OCI-LY7 (cell line): ENCODE measurements at regions of chr6 and their contacts with region 1.

Region 1: DNA sequence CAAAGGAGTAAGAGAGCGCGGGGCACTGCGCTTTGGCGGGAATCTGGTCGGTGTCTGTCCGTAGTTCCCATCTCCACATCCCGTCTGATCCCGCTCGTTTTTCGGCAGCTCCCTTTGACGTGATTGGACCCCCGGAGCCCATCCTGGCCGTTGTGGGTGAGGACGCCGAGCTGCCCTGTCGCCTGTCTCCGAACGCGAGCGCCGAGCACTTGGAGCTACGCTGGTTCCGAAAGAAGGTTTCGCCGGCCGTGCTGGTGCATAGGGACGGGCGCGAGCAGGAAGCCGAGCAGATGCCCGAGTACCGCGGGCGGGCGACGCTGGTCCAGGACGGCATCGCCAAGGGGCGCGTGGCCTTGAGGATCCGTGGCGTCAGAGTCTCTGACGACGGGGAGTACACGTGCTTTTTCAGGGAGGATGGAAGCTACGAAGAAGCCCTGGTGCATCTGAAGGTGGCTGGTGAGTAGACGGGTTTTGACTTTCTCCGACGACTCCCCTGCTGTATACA is 1.4 kb downstream of the BTN1A1 start:
- DNase-seq: no peak
- H3K4me3 ChIP-seq: peak overlapping the region; percentile 53
- H3K27ac ChIP-seq: peak overlapping the region; percentile 98
- H3K4me1 ChIP-seq: peaks cover 68% of the 10 kb centered on the region
- CTCF ChIP-seq: no peak

Region 2: GRCh38 chr6:26383624-26384417 is 117.7 kb before region 1 on chr6:
- CTCF ChIA-PET with region 1: no interaction called
- POLR2A ChIA-PET with region 1: no interaction called
- intact Hi-C with region 1: no loop called
- DNase-seq: peak; percentile 44
- H3K4me3 ChIP-seq: peak overlapping the region; percentile 94
- H3K27ac ChIP-seq: peak overlapping the region; percentile 57
- H3K4me1 ChIP-seq: peaks cover 62% of the 10 kb centered on the region
- CTCF ChIP-seq: no peak

Region 3: DNA sequence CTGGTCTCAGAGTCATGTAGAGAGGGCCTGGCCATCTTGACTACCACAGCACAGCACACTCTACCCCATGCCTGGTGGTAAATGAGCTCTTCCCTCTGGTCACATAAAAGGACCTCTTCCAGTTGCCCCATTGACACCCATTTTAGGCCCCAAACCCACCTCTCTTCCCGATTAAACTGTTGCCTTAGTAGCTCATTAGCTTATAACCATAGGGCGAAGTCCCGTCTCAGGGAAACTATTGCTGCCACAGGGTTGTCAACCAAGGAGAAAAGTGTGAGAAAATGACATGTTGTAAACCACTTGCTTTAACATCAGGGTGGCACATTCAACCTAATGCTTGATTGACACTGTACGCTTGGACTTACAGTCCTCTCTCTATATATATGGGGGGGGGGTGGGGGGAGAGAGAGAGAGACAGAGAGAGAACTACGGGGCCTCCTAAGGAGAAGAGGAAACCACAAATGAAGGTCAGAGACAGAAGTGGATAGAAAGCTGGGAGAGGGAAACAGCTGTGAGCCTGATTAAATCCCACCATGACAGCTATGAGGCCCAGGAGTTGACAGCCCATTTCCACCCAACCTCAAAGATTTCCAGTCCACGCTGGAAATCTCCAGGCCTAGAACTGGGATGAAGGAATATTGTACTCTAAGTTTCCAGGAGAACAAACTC is 16.3 kb before region 1 on chr6:
- CTCF ChIA-PET with region 1: interaction called, 3 read pairs
- POLR2A ChIA-PET with region 1: interaction called, 32 read pairs
- intact Hi-C with region 1: no loop called
- DNase-seq: no peak
- H3K4me3 ChIP-seq: no peak overlapping the region
- H3K27ac ChIP-seq: no peak overlapping the region
- H3K4me1 ChIP-seq: peaks cover 12% of the 10 kb centered on the region
- CTCF ChIP-seq: no peak

Region 4: GRCh38 chr6:26514984-26515383 is 13.4 kb after region 1 on chr6:
- CTCF ChIA-PET with region 1: interaction called, 4 read pairs
- POLR2A ChIA-PET with region 1: interaction called, 21 read pairs
- intact Hi-C with region 1: no loop called
- DNase-seq: no peak
- H3K4me3 ChIP-seq: no peak overlapping the region
- H3K27ac ChIP-seq: no peak overlapping the region
- H3K4me1 ChIP-seq: peaks cover 11% of the 10 kb centered on the region
- CTCF ChIP-seq: no peak

Region 5: DNA sequence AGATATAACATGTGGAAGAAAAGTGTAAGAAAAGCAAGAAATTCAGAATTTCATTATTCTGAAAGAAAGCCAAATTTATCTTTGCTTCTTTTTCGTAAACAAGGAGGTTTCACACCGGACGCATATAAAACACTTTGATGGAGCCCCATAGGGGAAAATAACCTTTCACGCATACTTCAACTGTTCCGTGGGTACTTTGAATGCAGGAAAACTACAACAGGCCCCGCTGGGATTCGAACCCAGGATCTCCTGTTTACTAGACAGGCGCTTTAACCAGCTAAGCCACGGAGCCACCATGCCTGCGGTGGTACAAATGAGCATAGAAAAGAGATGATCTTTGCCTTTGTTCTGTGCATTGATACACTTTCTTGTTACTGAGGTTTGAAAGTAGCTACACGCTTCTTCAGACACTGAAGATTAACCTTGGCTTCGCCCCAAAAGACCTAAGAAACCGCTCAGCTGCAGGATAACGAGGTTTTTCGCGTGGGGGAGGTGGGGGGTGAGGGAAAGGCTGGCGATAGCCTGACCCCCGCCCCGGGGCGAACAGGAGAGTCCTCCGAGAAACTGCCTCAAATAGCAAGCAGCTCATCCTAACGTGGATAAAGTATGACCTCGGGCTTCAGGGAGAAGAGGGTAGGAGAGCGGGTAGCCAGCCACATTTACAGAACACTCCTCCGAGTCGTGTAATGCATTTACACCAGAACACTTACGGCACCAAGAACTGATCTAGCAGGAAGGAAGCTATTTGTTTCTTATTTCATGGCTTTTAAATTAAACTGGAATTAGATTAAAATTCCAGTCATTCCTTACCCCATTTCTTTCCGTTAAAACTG is 31.4 kb after region 1 on chr6:
- CTCF ChIA-PET with region 1: no interaction called
- POLR2A ChIA-PET with region 1: interaction called, 28 read pairs
- intact Hi-C with region 1: loop called (anchors 2 kb)
- DNase-seq: peak; percentile 90
- H3K4me3 ChIP-seq: peak overlapping the region; percentile 69
- H3K27ac ChIP-seq: peak overlapping the region; percentile 93
- H3K4me1 ChIP-seq: peaks cover 47% of the 10 kb centered on the region
- CTCF ChIP-seq: no peak